ENCODE measurements at regions of chr10 and their contacts with region 1.

Region 1: GRCh38 chr10:132571650-132572535 is 34.3 kb downstream of the INPP5A start:
- DNase-seq: peak; percentile 83
- ATAC-seq: peak; percentile 85
- H3K4me3 Mint-ChIP-seq: peak overlapping the region; percentile 15
- H3K27ac Mint-ChIP-seq: no peak overlapping the region
- H3K4me1 Mint-ChIP-seq: peaks cover 33% of the 10 kb centered on the region
- H3K27me3 Mint-ChIP-seq: no peaks in the 10 kb centered on the region

Region 2: DNA sequence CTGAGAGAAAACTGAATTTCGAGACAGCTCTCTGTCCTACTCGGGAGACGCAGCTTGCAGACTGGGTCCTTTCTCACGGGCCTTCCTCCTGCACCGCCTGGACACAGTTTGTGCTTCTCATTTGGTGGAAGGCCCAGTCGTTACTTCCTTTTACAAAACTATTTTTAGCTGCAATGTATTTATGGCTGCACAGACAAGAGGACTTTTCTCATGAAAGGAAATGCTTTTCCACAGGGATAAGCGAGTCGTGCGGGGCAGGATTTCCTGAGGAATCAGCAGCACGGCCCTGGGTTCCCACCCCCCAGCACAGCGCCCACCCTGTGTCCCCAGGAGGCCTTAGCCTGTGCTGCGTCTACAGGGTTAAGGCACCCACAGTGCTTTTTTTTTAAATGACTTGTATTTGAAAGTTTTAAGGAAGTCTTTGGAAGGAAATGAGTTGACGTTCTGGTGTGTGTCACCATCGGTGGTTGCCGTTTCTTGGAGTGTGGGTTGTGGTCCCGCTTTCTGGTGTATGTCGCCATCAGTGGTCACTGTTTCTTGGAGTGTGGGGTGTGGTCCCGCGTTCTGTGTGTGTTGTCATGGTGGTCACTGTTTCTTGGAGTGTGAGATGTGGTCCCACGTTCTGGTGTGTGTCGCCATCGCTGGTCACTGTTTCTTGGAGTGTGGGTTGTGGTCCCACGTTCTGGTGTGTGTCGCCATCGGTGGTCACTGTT is 16.6 kb after region 1 on chr10:
- CTCF ChIA-PET with region 1: interaction called, 4 read pairs
- POLR2A ChIA-PET with region 1: no interaction called
- intact Hi-C with region 1: loop called in 1 of 2 experiments (anchors 2 kb)
- DNase-seq: peak; percentile 72
- ATAC-seq: peak; percentile 68
- H3K4me3 Mint-ChIP-seq: peak overlapping the region; percentile 44
- H3K27ac Mint-ChIP-seq: peak overlapping the region; percentile 42
- H3K4me1 Mint-ChIP-seq: peaks cover 59% of the 10 kb centered on the region
- H3K27me3 Mint-ChIP-seq: no peaks in the 10 kb centered on the region